ENCODE measurements at regions of chr7 and their contacts with region 1.

Region 1: GRCh38 chr7:954330-955238 is at the start of gene ADAP1:
- DNase-seq: peak; percentile 92
- H3K4me3 ChIP-seq: peak within 1 kb of the TSS; percentile 33 to 82 (median 53)
- H3K27ac ChIP-seq: peak within 1 kb of the TSS in 7 of 8 donors; percentile 52 to 92 (median 77)
- H3K4me1 ChIP-seq: peaks cover 6 to 75% (median 40%) of the 10 kb centered on the region in 6 donors
- H3K27me3 ChIP-seq: peaks cover 0 to 71% (median 22%) of the 10 kb centered on the region in 7 donors
- CTCF ChIP-seq: peak in 5 of 11 experiments; percentile 18 to 43 (median 24)
- POLR2A ChIP-seq: no peak
- total RNA-seq, gene ADAP1: 18.1 to 35.4 (median 25.7) TPM

Region 2: GRCh38 chr7:455110-455928 is 499.3 kb before region 1 on chr7:
- intact Hi-C with region 1: no loop called
- DNase-seq: peak; percentile 76
- H3K4me3 ChIP-seq: no peak overlapping the region
- H3K27ac ChIP-seq: peak overlapping the region in 6 of 8 donors; percentile 13 to 56 (median 34)
- H3K4me1 ChIP-seq: peaks cover 0 to 43% (median 21%) of the 10 kb centered on the region in 6 donors
- H3K27me3 ChIP-seq: peaks cover 0 to 51% (median 9%) of the 10 kb centered on the region in 7 donors
- CTCF ChIP-seq: no peak
- POLR2A ChIP-seq: no peak

Region 3: DNA sequence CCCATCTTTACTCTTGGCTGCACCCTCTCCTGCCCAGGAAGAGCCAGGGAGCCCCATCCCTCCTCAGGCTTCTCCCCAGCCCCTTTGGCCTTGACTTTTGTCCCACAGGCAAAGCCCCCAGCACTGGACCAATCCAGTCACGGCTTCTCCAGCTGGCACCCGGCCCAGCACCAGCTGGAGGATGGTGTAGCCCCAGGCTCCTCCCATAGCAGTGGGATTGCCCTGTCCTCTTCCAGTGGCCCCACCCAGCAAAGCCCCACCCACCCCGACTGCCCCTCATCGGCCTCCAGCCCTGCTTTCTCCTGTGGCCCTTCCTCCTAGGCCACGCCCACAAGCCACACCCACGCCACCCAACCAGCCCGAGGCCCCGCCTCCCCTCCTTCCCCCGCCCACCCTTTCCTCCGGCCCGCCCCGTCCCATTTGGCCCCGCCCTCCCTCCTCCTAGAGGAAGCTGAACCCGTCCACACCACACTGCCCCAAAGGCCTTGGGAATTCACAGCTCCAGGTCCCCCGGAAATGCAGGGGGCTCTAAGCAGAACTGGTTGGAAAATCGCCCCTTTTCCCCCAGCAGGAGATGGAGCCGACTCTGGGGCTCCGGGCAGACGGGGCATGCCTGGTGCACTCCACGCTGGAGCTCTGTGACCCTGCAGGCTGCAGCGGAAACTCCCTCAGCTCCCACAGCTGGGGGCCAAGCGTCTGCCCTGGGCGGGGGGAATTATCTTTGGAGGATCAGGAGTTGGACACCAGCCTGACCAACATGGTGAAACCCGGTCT is 53.0 kb before region 1 on chr7:
- intact Hi-C with region 1: loop called (anchors 10 kb)
- DNase-seq: peak; percentile 85
- H3K4me3 ChIP-seq: peak overlapping the region in 1 of 8 donors; percentile 32
- H3K27ac ChIP-seq: peak overlapping the region in 7 of 8 donors; percentile 20 to 65 (median 53)
- H3K4me1 ChIP-seq: peaks cover 0 to 47% (median 19%) of the 10 kb centered on the region in 6 donors
- H3K27me3 ChIP-seq: peaks cover 0 to 17% (median 0%) of the 10 kb centered on the region in 7 donors
- CTCF ChIP-seq: no peak
- POLR2A ChIP-seq: no peak

Measured in spleen (tissue), 13 donors.